GM18951 (cell line): ENCODE measurements at regions of chr5 and their contacts with region 1.

Region 1: DNA sequence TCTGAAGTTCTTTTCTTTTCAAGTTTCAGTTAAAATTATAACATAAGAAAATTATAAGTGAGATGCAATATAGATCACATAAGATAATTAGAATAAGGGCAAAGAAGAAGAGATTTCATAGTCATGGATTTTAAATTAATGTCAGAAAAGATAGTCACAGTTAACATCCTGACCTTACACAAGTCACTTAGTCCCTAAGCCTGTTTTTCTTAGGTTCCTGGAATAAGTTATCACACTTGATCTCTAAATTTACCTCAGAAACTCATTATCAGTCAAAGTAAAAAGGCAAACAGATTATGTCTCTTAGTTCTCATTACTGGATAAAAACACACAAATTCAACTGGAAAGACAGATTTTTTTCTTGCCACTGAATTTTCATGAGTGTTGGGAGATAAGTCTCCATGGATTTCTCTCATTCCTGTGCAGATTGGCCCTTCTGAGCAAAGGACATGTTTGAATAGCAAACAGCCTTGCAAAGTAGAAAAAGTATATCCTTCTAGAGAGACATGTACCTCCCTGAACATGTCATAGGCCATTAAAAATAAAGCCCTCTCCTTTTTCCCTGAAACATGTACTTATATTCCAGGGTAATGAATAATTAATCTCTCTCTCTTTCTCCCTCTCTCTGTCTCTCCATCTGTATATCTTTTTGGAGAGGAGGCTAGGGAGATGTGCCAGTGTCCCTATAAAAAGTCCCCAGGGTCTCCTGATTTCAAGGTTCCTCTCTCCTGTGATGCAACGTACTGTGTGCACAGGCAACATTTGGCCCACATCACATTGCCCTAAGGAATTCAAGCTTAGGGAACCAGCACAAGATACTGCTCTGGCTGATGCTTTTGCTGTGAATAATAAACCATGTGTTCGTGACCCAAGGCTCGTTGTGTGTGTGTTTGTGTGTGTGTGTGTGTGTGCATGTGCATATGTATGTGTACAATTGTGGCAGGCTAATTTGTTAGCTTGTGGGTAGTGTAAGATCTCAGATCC is 10.0 kb downstream of the SPATA9 start:
- POLR2A ChIP-seq: no peak

Region 2: GRCh38 chr5:95760273-95761191 is 87.8 kb after region 1 on chr5:
- in situ Hi-C with region 1: loop called (anchors 5 kb)
- POLR2A ChIP-seq: no peak

Region 3: GRCh38 chr5:96093890-96094381 is 421.2 kb after region 1 on chr5:
- in situ Hi-C with region 1: no loop called
- POLR2A ChIP-seq: no peak